Natural killer cell (primary cell): ENCODE measurements at regions of chr11 and their contacts with region 1.

Region 1: GRCh38 chr11:119101759-119102423 is at the start of gene DPAGT1:
- DNase-seq: peak; percentile 78 to 92
- ATAC-seq: peak; percentile 88 to 94 (median 90)
- H3K4me3 ChIP-seq: peak within 1 kb of the TSS; percentile 69
- H3K4me3 Mint-ChIP-seq: peak within 1 kb of the TSS; percentile 96
- H3K27ac ChIP-seq: peak within 1 kb of the TSS; percentile 77
- H3K27ac Mint-ChIP-seq: peak within 1 kb of the TSS; percentile 94 to 98
- H3K4me1 ChIP-seq: peaks cover 34% of the 10 kb centered on the region
- H3K4me1 Mint-ChIP-seq: peaks cover 29 to 38% of the 10 kb centered on the region in 2 donors
- H3K27me3 ChIP-seq: no peaks in the 10 kb centered on the region
- H3K27me3 Mint-ChIP-seq: no peaks in the 10 kb centered on the region
- CTCF ChIP-seq: no peak
- total RNA-seq, gene DPAGT1: 20.5 to 28.5 (median 24.4) TPM

Region 2: DNA sequence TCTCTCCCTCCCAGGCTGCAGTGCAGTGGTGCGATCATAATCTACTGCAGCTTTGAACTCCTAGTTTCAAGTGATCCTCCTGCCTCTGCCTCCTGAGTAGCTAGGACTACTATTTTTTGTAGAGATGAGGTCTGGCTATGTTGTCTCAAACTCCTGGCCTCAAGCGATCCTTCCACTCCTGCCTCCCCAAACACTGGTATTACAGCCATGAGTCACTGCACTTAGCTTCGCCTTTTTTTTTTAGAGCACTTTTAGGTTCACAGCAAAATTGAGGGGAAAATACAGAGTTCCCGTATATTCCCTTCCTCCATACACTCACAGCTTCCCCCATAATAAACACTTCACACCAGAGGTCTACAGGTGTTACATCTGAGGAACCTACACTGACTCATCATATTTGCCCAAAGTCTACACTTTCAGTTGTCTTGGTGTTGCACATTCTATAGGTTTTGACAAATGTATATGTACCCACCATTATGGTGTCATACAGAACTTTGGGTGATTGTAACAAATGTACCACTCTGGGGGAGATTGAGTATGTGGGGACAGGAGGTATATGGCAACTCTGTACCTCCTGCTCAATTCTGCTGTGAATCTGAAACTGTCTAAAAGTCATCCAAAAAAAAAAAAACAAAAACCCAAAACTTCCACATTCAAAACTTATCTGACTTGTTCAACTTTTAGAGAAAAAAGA is 59.9 kb before region 1 on chr11:
- intact Hi-C with region 1: no loop called
- DNase-seq: no peak
- ATAC-seq: no peak
- H3K4me3 ChIP-seq: no peak overlapping the region
- H3K4me3 Mint-ChIP-seq: no peak overlapping the region
- H3K27ac ChIP-seq: no peak overlapping the region
- H3K27ac Mint-ChIP-seq: no peak overlapping the region
- H3K4me1 ChIP-seq: no peaks in the 10 kb centered on the region
- H3K4me1 Mint-ChIP-seq: no peaks in the 10 kb centered on the region
- H3K27me3 ChIP-seq: no peaks in the 10 kb centered on the region
- H3K27me3 Mint-ChIP-seq: peaks cover 0 to 4% of the 10 kb centered on the region in 2 donors
- CTCF ChIP-seq: no peak

Region 3: DNA sequence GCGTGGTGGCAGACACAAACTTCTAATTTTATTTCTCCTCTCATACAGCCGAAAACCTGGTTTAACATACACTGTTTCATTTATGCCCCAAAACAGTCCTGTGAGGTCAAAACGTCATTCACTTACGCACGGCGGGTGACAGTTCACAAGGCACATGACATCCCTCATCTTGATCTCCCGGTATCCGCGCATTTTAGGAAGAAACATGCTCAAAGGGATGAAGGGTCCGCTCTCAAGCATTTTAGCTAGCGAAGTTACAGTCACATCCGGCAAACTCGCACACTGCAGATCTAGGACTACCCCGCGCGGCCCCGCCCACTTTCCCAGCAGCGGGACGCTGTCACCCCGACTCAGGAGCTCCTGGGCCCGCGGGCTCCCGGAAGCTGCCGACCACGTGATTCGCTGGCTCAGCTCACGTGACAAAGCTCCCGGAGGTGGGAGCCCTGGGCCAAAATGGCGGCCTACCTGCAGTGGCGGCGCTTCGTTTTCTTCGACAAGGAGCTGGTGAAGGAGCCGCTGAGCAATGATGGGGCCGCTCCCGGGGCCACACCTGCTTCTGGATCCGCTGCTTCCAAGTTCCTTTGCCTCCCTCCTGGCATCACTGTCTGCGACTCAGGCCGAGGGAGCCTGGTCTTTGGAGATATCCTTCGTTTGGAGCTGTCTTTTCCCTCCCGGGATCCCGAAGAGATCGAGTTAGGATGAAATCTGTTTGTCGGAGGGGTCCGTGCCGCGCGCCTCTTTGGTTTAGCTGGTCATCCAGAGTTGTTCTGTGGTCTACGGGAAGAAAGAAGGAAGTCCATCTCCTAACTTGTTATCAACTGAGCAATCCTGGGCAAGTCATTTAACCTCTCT is 34.3 kb before region 1 on chr11 and contains the start of gene VPS11:
- intact Hi-C with region 1: loop called (anchors 1 kb)
- DNase-seq: peak; percentile 95 to 99
- ATAC-seq: peak; percentile 92 to 99 (median 93)
- H3K4me3 ChIP-seq: peak within 1 kb of the TSS; percentile 91
- H3K4me3 Mint-ChIP-seq: peak within 1 kb of the TSS; percentile 95
- H3K27ac ChIP-seq: peak within 1 kb of the TSS; percentile 89
- H3K27ac Mint-ChIP-seq: peak within 1 kb of the TSS; percentile 98 to 99
- H3K4me1 ChIP-seq: peaks cover 19% of the 10 kb centered on the region
- H3K4me1 Mint-ChIP-seq: peaks cover 32 to 33% of the 10 kb centered on the region in 2 donors
- H3K27me3 ChIP-seq: no peaks in the 10 kb centered on the region
- H3K27me3 Mint-ChIP-seq: no peaks in the 10 kb centered on the region
- CTCF ChIP-seq: no peak
- total RNA-seq, gene VPS11: 91.4 to 101 (median 91.7) TPM

Region 4: DNA sequence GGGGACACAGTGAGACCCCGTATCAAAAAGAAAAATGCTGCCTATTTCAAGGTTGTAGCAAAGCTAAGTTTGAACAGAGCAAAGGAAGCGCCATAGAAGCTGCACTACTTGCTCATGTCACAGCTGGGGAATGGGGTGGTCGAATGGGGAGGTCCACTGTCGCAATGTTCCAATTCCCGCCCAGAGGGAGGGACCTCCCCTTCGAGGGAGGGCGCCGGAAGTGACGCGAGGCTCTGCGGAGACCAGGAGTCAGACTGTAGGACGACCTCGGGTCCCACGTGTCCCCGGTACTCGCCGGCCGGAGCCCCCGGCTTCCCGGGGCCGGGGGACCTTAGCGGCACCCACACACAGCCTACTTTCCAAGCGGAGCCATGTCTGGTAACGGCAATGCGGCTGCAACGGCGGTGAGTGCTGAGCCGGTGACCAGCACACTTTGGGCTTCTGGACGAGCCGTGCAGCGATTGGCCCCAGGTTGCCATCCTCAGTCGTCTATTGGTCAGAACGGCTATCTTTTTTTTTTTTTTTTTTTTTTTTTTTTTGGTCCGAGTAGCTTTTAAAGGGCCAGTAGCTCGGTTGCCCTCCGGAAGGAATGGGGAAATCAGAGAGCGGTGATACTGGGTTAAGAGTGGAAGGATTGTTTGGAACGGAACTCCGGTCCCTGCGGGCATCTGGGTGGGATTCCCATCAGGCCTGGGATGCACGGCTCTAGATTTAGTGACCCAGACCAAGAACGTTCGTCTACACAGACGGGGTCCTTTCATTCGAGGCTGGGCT is 17.0 kb before region 1 on chr11 and contains the start of gene HMBS:
- intact Hi-C with region 1: loop called (anchors 2 kb)
- DNase-seq: peak; percentile 93 to 97
- ATAC-seq: peak; percentile 93 to 97 (median 95)
- H3K4me3 ChIP-seq: peak within 1 kb of the TSS; percentile 83
- H3K4me3 Mint-ChIP-seq: peak within 1 kb of the TSS; percentile 92
- H3K27ac ChIP-seq: peak within 1 kb of the TSS; percentile 52
- H3K27ac Mint-ChIP-seq: peak within 1 kb of the TSS; percentile 92 to 94
- H3K4me1 ChIP-seq: peaks cover 24% of the 10 kb centered on the region
- H3K4me1 Mint-ChIP-seq: peaks cover 12 to 16% of the 10 kb centered on the region in 2 donors
- H3K27me3 ChIP-seq: no peaks in the 10 kb centered on the region
- H3K27me3 Mint-ChIP-seq: no peaks in the 10 kb centered on the region
- CTCF ChIP-seq: no peak
- total RNA-seq, gene HMBS: 6.1 to 10.1 (median 6.7) TPM